ENCODE measurements at regions of chr3 and their contacts with region 1.

Region 1: GRCh38 chr3:67008388-67008787 is 10.3 kb downstream of the KBTBD8 start:
- DNase-seq: no peak
- H3K4me3 Mint-ChIP-seq: no peak overlapping the region
- H3K27ac Mint-ChIP-seq: no peak overlapping the region
- H3K4me1 Mint-ChIP-seq: peaks cover 20% of the 10 kb centered on the region
- H3K27me3 Mint-ChIP-seq: no peaks in the 10 kb centered on the region

Region 2: GRCh38 chr3:66998113-66998903 is 10.1 kb before region 1 on chr3 and contains the start of gene KBTBD8:
- CTCF ChIA-PET with region 1: interaction called, 4 read pairs
- POLR2A ChIA-PET with region 1: interaction called, 10 read pairs
- DNase-seq: peak; percentile 98
- H3K4me3 Mint-ChIP-seq: peak within 1 kb of the TSS; percentile 85
- H3K27ac Mint-ChIP-seq: peak within 1 kb of the TSS; percentile 88
- H3K4me1 Mint-ChIP-seq: peaks cover 42% of the 10 kb centered on the region
- H3K27me3 Mint-ChIP-seq: peaks cover 20% of the 10 kb centered on the region
- total RNA-seq, gene KBTBD8: 14.8 to 16.0 TPM